AG04450 (cell line): ENCODE measurements at regions of chr4 and their contacts with region 1.

Region 1: GRCh38 chr4:41095973-41096372 is 118.4 kb downstream of the APBB2 start:
- DNase-seq: peak; percentile 45
- H3K4me3 ChIP-seq: no peak overlapping the region
- H3K27ac ChIP-seq: peak overlapping the region; percentile 22
- H3K27me3 ChIP-seq: no peaks in the 10 kb centered on the region
- CTCF ChIP-seq: no peak

Region 2: DNA sequence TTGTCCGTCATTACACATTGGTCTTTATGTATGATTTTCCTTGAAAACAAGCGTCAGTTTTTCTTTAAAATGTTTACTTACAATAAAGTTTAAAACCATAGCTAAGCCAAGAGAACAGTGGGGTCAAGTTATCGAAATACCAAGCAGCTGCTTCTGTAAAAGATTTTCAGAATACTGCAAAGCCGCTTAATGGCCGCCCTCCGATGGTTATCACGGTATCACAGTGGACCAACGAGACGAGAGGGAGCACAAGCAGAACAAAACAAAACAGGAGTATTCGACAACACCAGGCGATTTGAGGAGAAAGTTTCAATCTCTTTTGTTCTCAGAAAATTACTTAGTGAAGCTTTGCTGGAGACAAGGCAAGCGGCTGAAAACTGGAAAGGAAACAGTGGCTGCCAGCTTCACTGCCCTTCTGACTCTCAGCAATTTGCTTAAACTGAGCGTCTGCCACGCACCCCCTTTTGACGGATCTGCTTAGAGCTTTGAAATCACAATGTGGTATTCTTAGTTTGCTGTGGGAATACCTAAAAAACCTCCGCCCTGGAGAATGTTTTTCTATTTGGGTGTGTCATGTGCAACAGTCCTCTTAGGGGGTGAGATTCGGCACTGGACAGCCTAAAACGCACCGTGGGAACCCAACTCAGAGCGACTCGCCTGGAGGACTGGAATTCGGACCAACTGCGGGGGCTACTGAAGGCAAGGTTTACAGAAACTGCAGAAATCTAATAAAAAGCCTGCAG is 146.4 kb before region 1 on chr4:
- CTCF ChIA-PET with region 1: interaction called, 10 read pairs
- POLR2A ChIA-PET with region 1: no interaction called
- DNase-seq: no peak
- H3K4me3 ChIP-seq: no peak overlapping the region
- H3K27ac ChIP-seq: no peak overlapping the region
- H3K27me3 ChIP-seq: no peaks in the 10 kb centered on the region
- CTCF ChIP-seq: no peak